ENCODE measurements at regions of chr6 and their contacts with region 1.

Region 1: DNA sequence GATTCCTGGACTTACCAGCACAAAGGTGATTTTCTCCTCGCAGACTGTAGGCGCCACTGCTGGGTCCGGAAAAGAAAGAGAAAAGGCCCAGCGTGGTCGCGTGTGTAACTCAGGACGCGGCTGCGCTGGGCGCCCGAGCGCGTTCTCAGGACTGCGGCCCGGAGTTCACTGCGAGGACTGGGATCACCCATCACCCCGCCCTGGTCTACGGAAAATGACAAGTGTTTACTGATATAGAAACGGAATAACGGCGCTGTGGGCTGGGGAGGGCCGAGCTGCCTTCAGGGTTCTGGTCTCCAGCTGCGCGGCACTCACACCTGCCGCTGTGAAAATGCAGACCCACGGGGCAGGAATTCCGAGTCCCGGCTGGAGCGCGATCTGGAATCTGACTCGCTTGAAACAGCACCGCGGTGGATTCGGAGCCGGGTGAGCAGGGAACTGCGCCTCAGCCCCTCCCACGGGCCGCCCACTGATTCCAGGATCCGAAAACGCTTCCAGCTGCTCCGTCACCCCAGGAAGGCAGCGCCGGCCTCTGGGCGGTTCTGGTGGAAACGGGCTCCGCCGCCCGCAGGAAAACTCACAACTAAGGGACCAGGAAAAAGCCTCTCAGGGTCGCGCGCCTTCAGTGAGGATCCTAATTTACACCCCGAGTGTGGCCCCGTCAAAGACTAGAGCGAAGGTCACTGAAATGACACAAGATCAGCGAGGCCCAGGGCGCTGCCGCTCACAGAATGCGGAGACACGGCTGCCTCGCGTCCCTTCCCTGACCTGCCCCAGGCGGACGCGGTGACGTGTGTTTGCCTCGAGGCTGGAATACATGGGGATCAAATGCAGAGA is 34.5 kb downstream of the HLA-A start:
- DNase-seq: peak; percentile 93 to 95
- H3K4me3 ChIP-seq: peak overlapping the region; percentile 53 to 57
- H3K27ac ChIP-seq: peak overlapping the region; percentile 87 to 93
- H3K4me1 ChIP-seq: peaks cover 0 to 29% (median 12%) of the 10 kb centered on the region in 4 donors
- H3K27me3 ChIP-seq: no peaks in the 10 kb centered on the region
- CTCF ChIP-seq: peak; percentile 3 to 29

Region 2: GRCh38 chr6:29926413-29927274 is 50.2 kb before region 1 on chr6:
- intact Hi-C with region 1: loop called (anchors 2 kb)
- DNase-seq: peak; percentile 37 to 83
- H3K4me3 ChIP-seq: peak overlapping the region; percentile 56 to 59
- H3K27ac ChIP-seq: peak overlapping the region; percentile 73 to 86
- H3K4me1 ChIP-seq: peaks cover 0 to 8% (median 0%) of the 10 kb centered on the region in 4 donors
- H3K27me3 ChIP-seq: no peaks in the 10 kb centered on the region
- CTCF ChIP-seq: no peak

Region 3: DNA sequence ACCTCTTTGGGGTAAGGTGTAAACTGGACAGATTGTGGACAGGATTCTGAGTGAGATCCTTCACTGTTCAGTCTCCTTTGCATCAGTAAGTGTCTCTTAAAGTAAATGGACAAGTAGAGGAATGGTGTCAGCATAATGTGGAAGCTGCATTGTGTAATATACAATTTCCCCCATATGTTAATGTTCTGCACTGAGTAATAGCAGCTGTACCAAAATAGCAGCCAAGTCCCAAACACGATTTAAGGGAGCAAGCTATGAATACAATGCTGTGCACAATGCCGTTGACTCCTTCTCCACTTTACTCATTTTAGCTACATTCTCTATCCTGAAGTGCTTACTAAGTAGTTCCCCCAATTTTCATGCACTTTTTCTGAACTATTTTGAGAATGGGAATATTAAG is 257.6 kb after region 1 on chr6:
- intact Hi-C with region 1: no loop called
- DNase-seq: no peak
- H3K4me3 ChIP-seq: no peak overlapping the region
- H3K27ac ChIP-seq: no peak overlapping the region
- H3K4me1 ChIP-seq: no peaks in the 10 kb centered on the region
- H3K27me3 ChIP-seq: no peaks in the 10 kb centered on the region
- CTCF ChIP-seq: no peak